Thyroid gland (tissue), 4 donors: ENCODE measurements at regions of chr2 and their contacts with region 1.

Region 1: GRCh38 chr2:144332356-144333142 is 187.4 kb downstream of the ZEB2 start:
- DNase-seq: peak; percentile 85 to 86
- H3K4me3 ChIP-seq: peak overlapping the region in 2 of 3 donors; percentile 47 to 72
- H3K27ac ChIP-seq: peak overlapping the region; percentile 84 to 88 (median 85)
- H3K4me1 ChIP-seq: peaks cover 0 to 4% of the 10 kb centered on the region in 2 donors
- H3K27me3 ChIP-seq: no peaks in the 10 kb centered on the region
- CTCF ChIP-seq: no peak
- POLR2A ChIP-seq: peak in 1 of 2 donors; percentile 72

Region 2: DNA sequence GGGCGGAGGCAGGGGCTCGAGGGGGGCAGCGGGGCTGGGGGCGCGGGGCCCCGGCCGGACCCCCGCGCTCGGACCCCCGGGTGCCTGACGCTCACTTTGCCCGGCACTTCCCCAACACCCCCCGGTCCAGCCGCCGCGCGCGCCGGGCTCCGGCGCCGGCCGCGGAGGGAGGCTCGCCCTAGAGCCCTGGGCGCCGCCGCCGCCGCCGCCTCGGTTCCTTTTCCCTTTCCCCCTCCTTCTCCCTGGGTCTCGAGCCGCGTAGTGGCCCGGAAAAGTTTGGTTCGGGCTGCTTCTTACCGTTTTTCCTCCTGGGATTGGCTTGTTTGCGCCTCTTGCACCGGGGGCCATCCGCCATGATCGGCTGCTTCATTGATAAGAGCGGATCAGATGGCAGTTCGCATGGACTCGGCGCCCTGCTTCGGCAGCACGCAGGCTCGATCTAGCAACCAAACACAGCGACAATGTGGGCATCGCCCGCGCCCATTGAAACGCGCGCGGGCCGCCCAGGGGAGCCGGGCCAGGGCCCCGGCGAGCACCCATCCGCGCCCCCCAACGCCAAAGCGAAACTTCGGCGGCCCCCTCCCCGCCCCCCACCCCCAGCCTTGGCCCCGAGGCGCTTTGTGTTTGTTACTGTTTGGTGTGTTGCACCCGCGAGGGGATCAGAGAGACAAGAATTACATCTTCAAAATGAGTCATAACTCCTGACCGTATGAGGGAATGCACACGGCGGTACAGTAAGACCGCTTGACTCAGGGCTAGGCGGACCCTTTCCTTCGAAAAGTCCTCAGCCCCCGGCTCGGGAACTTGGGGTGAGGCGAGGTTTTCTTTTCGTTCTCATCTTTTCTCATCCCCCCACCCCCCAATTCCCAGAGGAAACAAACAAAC is 184.7 kb after region 1 on chr2:
- intact Hi-C with region 1: loop called (anchors 10 kb)
- DNase-seq: no peak
- H3K4me3 ChIP-seq: peak overlapping the region; percentile 42 to 75 (median 51)
- H3K27ac ChIP-seq: peak overlapping the region; percentile 80 to 94 (median 89)
- H3K4me1 ChIP-seq: peaks cover 0 to 18% of the 10 kb centered on the region in 2 donors
- H3K27me3 ChIP-seq: peaks cover 18% of the 10 kb centered on the region
- CTCF ChIP-seq: no peak
- POLR2A ChIP-seq: no peak

Region 3: GRCh38 chr2:144967961-144968360 is 635.4 kb after region 1 on chr2:
- intact Hi-C with region 1: no loop called
- DNase-seq: no peak
- H3K4me3 ChIP-seq: no peak overlapping the region
- H3K27ac ChIP-seq: no peak overlapping the region
- H3K4me1 ChIP-seq: no peaks in the 10 kb centered on the region
- H3K27me3 ChIP-seq: no peaks in the 10 kb centered on the region
- CTCF ChIP-seq: no peak
- POLR2A ChIP-seq: no peak